Posterior cingulate gyrus (tissue), 11 donors: ENCODE measurements at regions of chr11 and their contacts with region 1.

Region 1: DNA sequence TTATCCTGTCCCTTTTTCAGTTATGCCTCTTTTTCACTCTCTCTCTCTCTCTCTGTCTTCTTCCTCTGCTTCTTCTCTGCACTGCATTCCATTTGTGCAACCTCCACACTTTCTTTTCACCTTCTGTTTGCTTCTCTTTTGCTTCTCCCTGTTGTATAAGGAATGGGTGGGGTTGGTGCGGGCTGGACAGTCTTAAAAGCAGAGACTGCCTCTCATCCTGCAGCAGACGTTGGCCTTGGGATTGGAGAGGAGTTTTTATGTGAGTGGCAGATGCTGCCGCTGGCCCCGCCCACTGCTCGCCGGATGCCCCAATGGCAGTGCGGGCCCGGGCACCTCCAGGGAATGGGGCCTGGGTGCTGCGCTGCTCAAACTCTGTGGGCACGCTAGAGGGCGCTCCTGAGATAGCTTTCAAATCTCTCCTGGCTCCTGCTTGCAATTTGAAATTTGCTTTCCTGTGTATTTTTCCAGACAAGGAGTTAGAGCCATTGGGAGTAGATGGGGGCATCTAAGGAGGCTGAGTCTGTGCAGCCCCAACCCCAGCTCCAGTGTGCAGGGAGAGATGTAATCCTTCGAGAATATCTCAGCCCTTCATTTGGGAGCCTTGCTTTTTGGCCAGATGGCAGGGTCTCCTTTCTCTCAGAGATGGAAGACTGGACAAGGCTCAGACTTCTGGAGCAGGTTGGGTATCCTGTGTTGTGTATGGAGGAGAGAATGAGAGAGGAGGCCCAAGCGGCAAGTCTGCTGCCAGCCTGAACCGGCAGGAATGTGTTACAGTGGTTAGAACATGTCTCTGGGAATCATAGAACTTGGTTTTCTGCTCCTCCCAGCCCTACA is 81.2 kb downstream of the GRAMD1B start:
- DNase-seq: peak; percentile 89 to 99 (median 95)

Region 2: GRCh38 chr11:123308077-123308476 is 203.2 kb before region 1 on chr11:
- intact Hi-C with region 1: no loop called
- DNase-seq: no peak

Region 3: GRCh38 chr11:123438191-123438627 is 73.0 kb before region 1 on chr11:
- intact Hi-C with region 1: no loop called
- DNase-seq: no peak

Region 4: DNA sequence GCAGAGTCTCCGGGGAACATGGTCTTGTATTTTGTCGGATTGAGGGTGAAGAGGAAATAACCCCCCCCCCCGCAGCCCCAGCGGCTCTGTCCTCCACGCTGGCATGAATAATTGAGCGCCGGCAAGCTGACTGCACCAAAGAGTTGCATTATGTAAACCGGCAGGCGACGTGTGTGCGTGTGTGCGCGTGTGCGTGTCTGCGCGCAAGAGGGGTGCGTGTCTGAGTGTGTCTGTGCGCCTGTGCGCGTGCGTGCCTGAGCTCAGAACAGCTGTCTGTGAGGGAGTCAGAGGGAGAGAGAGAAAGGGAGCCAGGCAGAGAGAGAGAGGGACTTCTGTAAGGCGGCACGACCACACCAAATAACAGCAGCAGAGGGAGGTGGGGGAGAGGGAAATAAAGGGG is 48.8 kb after region 1 on chr11:
- intact Hi-C with region 1: loop called (anchors 2 kb)
- DNase-seq: peak; percentile 57 to 97 (median 84)

Region 5: DNA sequence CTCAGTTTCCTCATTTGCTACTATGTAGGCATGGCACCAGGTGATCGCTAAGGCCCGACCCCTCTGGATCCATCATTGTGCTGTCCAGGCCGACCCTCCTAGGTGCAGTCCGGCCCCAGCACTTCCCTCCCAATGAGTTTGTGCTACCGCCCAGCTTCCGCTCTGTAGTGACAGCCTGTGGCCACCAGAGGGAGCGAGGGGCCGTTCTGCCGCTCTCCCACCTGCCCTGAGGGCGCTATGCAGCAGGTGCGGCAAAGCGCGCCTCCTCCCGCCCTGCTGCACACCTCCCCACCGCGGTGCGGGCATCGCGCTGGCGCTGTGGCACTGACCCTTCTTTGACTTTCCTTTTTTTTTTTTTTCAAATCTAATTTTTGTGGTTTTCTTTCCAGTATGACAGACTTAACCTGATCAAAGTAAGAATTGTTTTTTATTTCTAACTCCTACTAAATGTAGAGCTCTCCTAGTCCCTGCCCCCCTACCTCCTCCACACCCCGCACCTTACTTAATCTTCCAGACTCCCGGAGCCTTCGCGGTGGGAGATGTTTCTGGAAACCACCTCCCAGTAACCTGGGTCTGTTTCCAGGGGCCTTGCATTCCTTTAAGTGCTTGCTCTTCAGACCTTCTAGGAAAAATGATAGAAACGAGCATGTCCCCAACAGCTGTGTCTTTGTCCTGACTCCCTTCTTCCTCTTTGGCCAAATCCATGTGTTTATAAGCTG is 69.5 kb after region 1 on chr11:
- intact Hi-C with region 1: loop called (anchors 1 kb)
- DNase-seq: peak in 9 of 10 donors; percentile 49 to 95 (median 66)